ENCODE measurements at regions of chr6 and their contacts with region 1.

Region 1: DNA sequence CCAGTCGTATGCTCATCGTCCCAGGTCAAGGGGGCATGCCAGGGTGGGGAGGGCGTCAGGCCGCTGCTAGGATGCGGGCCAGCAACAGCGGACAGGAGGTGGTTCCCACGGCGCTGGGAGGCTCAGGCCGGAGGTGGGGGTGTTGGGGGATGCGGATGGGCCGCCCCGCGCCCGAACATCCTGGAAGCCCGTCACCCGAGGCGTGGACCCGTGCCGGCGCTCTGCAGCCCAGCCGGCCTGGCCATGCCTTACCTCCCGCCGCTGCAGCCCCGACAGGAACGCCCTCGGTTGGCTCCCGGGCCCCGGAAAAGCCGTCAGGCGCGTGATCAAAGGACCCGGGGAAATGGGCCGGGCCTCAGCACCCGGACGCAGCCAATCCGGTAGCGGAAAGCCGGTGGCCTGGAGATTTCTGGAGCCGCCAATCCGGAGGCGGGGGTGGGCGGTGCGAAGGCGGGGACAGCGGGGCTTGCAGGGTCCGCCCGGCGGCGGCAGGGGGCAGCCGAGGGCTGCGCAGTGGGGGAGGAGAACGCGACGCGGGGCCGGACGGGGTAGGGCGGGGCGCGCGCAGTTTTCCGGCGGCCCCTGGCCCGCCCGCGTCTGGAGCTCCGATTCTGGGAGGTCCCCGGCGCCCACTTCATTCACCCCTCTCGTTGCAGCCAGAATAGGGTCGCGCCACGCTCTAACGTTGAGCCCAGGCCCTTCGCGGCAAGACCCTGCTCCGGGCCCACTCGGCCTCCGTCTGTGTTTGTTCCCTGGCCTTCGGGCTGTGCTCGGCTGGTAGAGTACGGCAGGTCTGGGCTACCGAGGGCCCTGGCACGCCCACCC is at the start of gene SMIM29:
- DNase-seq: peak; percentile 89 to 95 (median 95)
- H3K4me3 ChIP-seq: peak within 1 kb of the TSS; percentile 53 to 94 (median 89)
- H3K27ac ChIP-seq: peak within 1 kb of the TSS; percentile 33 to 83
- H3K4me1 ChIP-seq: peaks cover 5 to 36% (median 30%) of the 10 kb centered on the region in 4 experiments
- H3K27me3 ChIP-seq: no peaks in the 10 kb centered on the region

Region 2: GRCh38 chr6:34196126-34196830 is 52.7 kb before region 1 on chr6:
- CTCF ChIA-PET with region 1: interaction called, 23 read pairs
- POLR2A ChIA-PET with region 1: interaction called, 4 read pairs
- DNase-seq: peak; percentile 83 to 89 (median 87)
- H3K4me3 ChIP-seq: peak overlapping the region; percentile 10 to 83 (median 60)
- H3K27ac ChIP-seq: no peak overlapping the region
- H3K4me1 ChIP-seq: peaks cover 0 to 15% (median 10%) of the 10 kb centered on the region in 4 experiments
- H3K27me3 ChIP-seq: peaks cover 0 to 4% (median 0%) of the 10 kb centered on the region in 5 experiments

Region 3: DNA sequence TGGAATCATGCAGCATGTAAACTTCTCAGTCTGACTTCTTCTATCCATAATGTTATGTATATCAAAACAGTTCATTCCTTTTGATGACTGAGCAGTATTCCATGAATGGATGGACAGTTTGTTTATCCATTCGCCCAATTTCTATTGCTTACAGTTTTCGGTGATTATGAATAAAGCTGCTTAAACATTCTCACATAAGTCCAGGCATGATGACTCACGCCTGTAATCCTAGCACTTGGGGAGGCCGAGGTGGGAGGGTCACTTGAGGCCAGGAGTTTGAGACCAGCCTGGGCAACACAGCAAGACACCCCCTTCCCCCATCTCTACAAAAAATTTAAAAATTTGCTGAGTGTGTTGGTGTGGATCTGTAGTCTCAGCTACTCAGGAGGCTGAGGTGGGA is 35.2 kb before region 1 on chr6:
- CTCF ChIA-PET with region 1: no interaction called
- POLR2A ChIA-PET with region 1: no interaction called
- DNase-seq: no peak
- H3K4me3 ChIP-seq: no peak overlapping the region
- H3K27ac ChIP-seq: no peak overlapping the region
- H3K4me1 ChIP-seq: no peaks in the 10 kb centered on the region
- H3K27me3 ChIP-seq: no peaks in the 10 kb centered on the region

Region 4: GRCh38 chr6:34236131-34236996 is 12.6 kb before region 1 on chr6 and contains the start of gene HMGA1:
- CTCF ChIA-PET with region 1: interaction called, 5 read pairs
- POLR2A ChIA-PET with region 1: interaction called, 14 read pairs
- DNase-seq: peak; percentile 91 to 97 (median 95)
- H3K4me3 ChIP-seq: peak within 1 kb of the TSS; percentile 61 to 87 (median 79)
- H3K27ac ChIP-seq: peak within 1 kb of the TSS; percentile 58 to 87
- H3K4me1 ChIP-seq: peaks cover 2 to 42% (median 34%) of the 10 kb centered on the region in 4 experiments
- H3K27me3 ChIP-seq: no peaks in the 10 kb centered on the region

Region 5: DNA sequence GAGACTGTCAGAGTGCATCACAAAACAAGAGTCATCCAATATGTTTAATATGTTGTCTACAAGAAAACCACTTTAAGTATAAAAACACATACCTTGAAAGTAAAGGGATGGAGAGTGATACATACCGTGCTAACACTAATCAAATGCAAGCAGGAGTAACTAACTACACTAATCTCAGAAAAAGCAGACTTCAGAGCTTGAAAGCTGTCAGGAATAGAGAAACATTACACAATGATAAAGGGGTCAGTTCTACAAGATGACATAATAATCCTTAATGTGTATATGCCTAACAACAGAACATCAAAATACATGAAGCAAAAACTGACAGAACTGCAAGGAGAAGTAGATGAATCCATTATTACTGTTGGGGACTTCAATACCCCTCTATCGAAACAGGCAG is 59.5 kb after region 1 on chr6:
- CTCF ChIA-PET with region 1: interaction called, 13 read pairs
- POLR2A ChIA-PET with region 1: no interaction called
- DNase-seq: no peak
- H3K4me3 ChIP-seq: no peak overlapping the region
- H3K27ac ChIP-seq: no peak overlapping the region
- H3K4me1 ChIP-seq: peaks cover 0 to 5% (median 2%) of the 10 kb centered on the region in 4 experiments
- H3K27me3 ChIP-seq: no peaks in the 10 kb centered on the region

Region 6: DNA sequence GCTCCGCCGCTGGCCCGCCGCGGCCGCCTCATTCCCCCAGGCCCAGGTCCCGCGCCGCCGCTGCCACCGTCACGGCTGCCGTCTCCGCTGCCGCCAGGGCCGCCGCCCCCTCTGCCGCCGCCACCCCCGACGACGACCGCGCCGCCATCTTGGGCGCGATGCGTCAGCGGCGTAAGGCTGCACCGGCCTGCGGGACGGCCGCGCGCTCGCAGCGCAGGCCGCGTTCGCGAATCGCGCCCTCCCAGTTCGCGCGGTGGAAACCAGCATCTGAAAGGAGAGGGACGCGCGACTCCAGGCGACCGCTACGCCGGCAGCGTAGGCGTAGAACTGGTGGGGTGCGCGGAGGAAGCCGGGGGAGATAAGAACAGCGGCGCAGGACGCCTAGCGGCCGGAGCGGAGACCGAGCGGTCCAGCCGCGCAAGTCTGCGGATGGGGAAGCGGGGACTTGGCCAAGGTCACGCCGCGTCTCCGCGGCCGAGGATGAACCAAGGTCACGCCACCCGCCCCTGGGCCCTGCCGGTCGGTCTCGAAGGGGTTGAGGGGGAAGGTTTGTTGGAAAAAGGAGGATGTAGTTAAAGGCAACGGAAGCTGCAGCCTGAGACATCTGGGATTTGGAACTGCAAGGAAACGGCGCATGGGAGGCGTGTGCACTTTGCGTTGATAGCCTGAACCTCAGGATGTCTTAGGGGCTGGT is 143.7 kb after region 1 on chr6 and contains the start of gene NUDT3:
- CTCF ChIA-PET with region 1: interaction called, 34 read pairs
- POLR2A ChIA-PET with region 1: interaction called, 8 read pairs
- DNase-seq: peak; percentile 97 to 98 (median 98)
- H3K4me3 ChIP-seq: peak within 1 kb of the TSS; percentile 82 to 96 (median 90)
- H3K27ac ChIP-seq: peak within 1 kb of the TSS; percentile 61 to 86
- H3K4me1 ChIP-seq: peaks cover 10 to 30% (median 19%) of the 10 kb centered on the region in 4 experiments
- H3K27me3 ChIP-seq: no peaks in the 10 kb centered on the region

Region 7: DNA sequence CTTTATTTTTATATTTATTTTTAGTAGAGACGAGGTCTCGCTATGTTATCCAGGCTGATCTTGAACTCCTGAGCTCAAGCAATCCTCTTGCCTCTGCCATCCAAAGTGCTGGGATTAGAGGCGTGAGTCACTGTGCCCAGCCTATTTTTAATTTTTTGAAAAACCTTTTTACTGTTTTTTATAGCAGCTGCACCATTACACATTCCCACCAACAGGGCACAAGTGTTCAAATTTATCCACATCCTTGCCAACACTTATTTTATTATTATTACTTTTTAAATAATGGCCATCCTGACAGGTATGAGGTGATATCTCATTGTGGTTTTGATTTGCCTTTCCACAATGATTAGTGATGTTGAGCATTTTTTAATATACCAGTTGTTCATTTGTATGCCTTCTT is 259.5 kb after region 1 on chr6:
- CTCF ChIA-PET with region 1: no interaction called
- POLR2A ChIA-PET with region 1: no interaction called
- DNase-seq: no peak
- H3K4me3 ChIP-seq: no peak overlapping the region
- H3K27ac ChIP-seq: no peak overlapping the region
- H3K4me1 ChIP-seq: no peaks in the 10 kb centered on the region
- H3K27me3 ChIP-seq: no peaks in the 10 kb centered on the region

Region 8: DNA sequence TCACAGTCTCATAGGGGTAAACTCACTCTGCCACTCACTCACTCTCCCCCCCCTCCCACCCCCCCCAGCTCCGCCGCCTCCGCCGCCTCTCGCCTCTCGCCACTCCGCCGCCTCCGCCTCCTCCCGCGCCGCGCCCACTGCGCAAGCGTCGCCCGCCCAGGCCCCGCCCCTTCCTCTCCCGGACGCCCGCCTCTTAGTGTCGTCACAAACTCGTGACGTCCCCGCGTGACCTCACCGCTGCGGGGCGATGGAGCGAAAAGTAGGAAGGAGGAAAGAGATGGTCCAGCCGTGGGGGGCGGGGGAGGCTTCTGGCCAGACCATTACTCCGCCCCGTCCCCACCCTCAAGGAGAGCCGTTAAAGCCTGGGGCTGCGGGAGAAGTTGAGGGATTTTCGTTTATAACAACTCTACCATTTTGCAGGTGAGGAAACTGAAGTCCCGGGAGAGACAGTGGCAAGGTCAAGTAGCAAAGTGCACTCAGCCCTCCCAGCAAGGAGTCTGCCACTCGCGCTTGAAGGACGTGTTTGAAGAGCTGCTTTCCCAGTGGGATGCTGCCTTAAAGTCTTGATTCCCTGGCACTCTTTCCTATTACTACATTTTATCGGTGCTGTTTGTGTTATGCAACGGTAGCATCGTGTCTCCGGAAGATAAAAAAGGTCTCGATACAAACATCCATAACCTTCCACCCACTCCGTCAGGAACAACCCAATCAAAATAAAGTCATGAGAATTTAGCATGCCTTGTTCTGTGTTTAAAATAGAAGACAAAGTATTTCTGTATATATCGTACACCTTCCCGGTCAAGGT is 448.0 kb after region 1 on chr6 and contains the start of gene ILRUN:
- CTCF ChIA-PET with region 1: no interaction called
- POLR2A ChIA-PET with region 1: no interaction called
- DNase-seq: peak; percentile 94 to 96 (median 96)
- H3K4me3 ChIP-seq: peak within 1 kb of the TSS; percentile 85 to 99 (median 93)
- H3K27ac ChIP-seq: peak within 1 kb of the TSS; percentile 84 to 96
- H3K4me1 ChIP-seq: peaks cover 9 to 37% (median 25%) of the 10 kb centered on the region in 4 experiments
- H3K27me3 ChIP-seq: no peaks in the 10 kb centered on the region